ENCODE measurements at regions of chr20 and their contacts with region 1.

Region 1: GRCh38 chr20:14055127-14055742 is 59.9 kb downstream of the MACROD2 start:
- DNase-seq: no peak
- ATAC-seq: peak; percentile 65
- H3K4me3 ChIP-seq: no peak overlapping the region
- H3K27ac ChIP-seq: no peak overlapping the region
- H3K4me1 ChIP-seq: no peaks in the 10 kb centered on the region
- H3K27me3 ChIP-seq: no peaks in the 10 kb centered on the region
- CTCF ChIP-seq: peak; percentile 65

Region 2: DNA sequence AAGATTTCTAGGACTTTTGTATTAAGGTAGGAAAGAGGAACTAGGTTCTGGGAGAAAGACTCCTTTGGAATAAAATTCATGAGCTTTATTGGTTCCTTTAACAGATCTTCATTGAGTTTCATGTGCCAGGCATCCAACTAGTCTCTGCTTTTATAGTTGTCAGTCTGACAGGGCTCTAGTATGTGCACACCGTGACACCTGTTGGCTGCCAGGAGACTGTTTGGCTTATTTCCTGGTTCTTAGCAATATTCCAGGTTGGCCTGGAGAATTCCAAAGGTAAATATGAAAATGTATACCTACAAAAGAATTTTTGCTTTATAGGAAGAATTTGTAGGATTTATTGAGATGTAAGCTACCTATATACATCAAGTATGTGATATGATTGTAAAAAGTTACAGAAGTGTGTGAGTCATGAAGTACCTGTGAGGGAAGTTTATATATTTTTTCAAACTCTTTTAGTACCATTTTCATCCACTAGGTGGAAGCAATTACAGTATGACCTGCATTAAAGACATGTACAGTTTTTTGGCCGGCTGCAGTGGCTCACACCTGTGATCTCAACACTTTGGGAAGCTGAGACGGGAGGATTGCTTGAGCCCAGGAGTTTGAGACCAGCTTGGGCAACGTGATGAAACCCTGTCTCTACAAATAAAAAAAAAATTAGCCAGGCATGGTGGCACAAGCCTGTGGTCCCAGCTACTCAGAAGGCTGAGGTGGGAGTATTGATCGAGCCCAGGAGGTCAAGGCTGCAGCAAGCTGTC is 235.2 kb before region 1 on chr20:
- intact Hi-C with region 1: loop called (anchors 10 kb)
- DNase-seq: no peak
- ATAC-seq: peak; percentile 79
- H3K4me3 ChIP-seq: no peak overlapping the region
- H3K27ac ChIP-seq: no peak overlapping the region
- H3K4me1 ChIP-seq: peaks cover 3% of the 10 kb centered on the region
- H3K27me3 ChIP-seq: no peaks in the 10 kb centered on the region
- CTCF ChIP-seq: peak; percentile 64

Measured in upper lobe of right lung (tissue), 1 donor.